ENCODE measurements at regions of chr18 and their contacts with region 1.

Region 1: GRCh38 chr18:23071285-23071684 is 64.0 kb upstream of the CABLES1 start:
- DNase-seq: peak; percentile 26
- ATAC-seq: peak; percentile 95
- H3K4me3 Mint-ChIP-seq: peak overlapping the region; percentile 60
- H3K27ac Mint-ChIP-seq: peak overlapping the region; percentile 72
- H3K4me1 Mint-ChIP-seq: peaks cover 51% of the 10 kb centered on the region
- H3K27me3 Mint-ChIP-seq: no peaks in the 10 kb centered on the region
- CTCF ChIP-seq: no peak

Region 2: DNA sequence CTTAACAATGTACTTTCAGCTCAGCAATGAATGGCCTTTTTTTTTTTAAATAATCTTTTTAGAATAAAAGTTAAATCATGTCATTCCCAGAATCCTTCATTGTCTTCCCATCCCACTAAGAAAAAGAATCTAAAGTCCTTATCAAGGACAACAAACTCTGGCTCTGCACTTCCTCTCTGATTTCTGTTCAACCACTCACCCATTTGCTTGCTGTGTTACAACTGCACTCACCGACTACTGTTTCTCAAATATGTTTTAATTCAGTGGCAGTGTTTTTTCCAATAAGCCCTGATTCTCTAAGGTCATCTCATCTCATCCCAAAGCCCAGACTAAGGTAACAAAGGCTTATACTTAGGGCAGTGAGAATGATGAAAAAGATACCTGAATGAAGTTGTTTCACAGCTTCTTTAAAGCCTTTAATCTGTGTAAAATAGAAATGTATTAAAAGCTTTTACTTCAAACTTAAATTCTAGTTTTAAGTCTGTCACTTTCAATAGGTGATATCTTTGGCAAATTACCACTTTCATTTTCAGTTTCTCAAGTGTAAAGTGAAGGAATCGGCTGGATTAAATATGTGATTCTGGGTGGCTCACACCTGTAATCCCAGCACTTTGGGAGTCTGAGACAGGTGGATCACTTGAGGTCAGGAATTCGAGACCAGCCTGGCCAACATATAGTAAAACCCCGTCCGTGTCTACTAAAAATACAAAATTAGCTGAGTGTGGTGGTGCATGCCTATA is 50.6 kb before region 1 on chr18:
- CTCF ChIA-PET with region 1: no interaction called
- POLR2A ChIA-PET with region 1: no interaction called
- intact Hi-C with region 1: loop called (anchors 5 kb)
- DNase-seq: no peak
- ATAC-seq: no peak
- H3K4me3 Mint-ChIP-seq: peak overlapping the region; percentile 50
- H3K27ac Mint-ChIP-seq: no peak overlapping the region
- H3K4me1 Mint-ChIP-seq: peaks cover 10% of the 10 kb centered on the region
- H3K27me3 Mint-ChIP-seq: no peaks in the 10 kb centered on the region
- CTCF ChIP-seq: no peak